ENCODE measurements at regions of chr4 and their contacts with region 1.

Region 1: DNA sequence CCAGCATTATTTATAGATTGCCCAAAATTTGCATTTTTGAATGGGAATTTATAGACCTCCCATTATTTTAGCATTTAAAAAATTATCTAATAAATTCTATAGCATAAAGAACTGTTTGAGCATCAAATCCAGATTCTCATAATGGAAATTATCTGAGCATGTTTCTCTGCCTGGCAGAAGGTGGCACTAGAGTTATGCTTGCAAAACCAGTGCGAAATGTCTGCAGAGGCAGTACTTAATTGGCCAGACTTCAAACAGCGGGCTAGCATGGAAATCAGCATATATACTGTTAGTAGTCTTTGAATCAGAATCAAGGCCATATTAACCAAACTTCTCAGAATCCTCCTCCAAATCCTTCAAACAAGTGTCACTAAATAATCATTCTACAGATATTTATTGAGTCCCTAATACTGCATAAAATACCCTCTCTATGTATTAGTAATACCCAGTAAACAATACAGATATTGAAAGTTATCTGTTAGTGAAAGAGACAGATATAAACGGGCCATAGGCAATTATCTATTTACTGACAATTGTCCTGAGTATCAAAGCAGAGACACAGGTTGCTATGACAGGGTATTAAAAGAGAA is 78.7 kb upstream of the DCLK2 start:
- DNase-seq: no peak
- ATAC-seq: peak; percentile 80 to 87 (median 82)
- H3K4me3 ChIP-seq: no peak overlapping the region
- H3K27ac ChIP-seq: no peak overlapping the region
- H3K4me1 ChIP-seq: peaks cover 0 to 8% (median 0%) of the 10 kb centered on the region in 4 donors
- H3K27me3 ChIP-seq: no peaks in the 10 kb centered on the region
- CTCF ChIP-seq: peak; percentile 59 to 74 (median 68)
- POLR2A ChIP-seq: no peak

Region 2: DNA sequence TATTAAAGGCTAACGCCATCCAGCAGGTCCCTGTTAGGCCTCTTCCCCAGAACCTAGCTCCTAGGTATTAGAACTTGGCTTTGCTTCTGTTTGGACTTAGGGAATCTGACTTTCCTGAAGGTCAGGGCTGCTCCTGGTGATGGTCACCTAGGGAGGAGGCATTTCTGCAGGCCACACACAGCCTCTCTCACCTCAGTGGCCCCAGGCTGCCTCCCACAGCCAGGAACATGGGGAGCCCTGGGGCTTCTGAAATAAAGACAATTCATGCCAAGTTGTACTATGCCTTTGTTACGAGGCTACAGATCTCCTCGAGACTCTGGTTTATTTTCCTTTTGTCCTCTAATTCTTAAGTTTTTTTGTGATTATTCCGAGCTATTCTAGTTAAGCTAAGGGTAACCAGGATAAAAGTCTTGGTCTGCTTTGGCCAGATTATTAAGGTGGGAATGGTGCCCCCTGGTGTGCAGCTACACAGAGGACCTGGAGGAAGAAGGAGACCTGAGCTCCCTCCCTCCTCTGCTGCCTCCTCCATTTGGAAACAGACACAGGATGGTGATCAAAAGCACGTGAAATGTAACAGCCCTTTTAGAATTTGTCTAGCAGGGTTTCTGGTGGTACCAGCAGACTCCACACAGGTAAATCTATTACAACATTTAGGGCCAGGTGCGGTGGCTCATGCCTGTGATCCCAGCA is 209.7 kb after region 1 on chr4:
- intact Hi-C with region 1: loop called in 1 of 2 experiments (anchors 10 kb)
- DNase-seq: peak in 1 of 3 donors; percentile 45
- ATAC-seq: peak; percentile 62 to 81 (median 74)
- H3K4me3 ChIP-seq: no peak overlapping the region
- H3K27ac ChIP-seq: no peak overlapping the region
- H3K4me1 ChIP-seq: no peaks in the 10 kb centered on the region
- H3K27me3 ChIP-seq: no peaks in the 10 kb centered on the region
- CTCF ChIP-seq: peak; percentile 19 to 39 (median 35)
- POLR2A ChIP-seq: no peak